ENCODE measurements at regions of chr19 and their contacts with region 1.

Region 1: DNA sequence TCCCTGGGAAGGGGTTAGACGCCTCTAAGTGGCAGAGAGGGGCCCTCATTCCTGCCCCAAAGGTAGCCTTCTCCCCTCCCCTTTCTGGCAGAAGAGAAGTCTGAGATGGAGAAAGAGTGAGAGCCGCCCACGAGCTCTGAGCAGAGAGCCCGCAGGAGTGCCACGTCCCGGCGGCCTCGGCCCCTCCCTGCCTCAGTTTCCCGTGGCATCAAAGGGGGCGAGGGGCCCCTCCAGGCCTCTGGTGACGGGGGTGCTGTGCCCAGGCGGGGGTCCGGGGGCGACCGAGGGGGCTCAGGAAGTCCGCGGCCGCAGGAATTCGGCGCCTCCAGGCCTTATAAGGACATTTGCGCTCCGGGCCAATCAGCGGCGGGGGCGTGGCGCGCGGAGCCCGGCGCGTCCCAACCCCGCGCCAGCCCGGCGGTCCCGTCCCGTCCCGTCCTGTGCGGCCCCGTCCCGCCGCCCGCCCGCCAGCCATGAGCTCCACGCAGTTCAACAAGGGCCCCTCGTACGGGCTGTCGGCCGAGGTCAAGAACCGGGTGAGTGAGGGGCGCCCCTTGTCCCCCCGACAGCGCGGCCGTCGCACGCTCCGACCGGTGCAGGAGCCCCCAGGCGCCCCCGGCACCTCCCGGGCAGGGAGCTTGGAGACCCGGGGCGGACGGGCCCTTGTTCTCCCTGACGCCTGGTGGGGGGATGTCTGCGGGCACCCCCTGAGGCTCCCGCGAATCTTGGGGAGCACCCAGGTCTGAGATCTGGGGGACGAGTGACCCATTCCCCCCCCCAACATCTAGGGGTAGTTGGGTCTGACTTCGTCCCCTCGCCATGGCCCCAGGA is at the start of gene CNN2:
- DNase-seq: peak; percentile 93
- H3K4me3 ChIP-seq: peak within 1 kb of the TSS; percentile 82 to 100 (median 90)
- H3K27ac ChIP-seq: peak within 1 kb of the TSS; percentile 95 to 100 (median 98)
- H3K4me1 ChIP-seq: peaks cover 0 to 61% (median 43%) of the 10 kb centered on the region in 4 donors
- H3K27me3 ChIP-seq: no peaks in the 10 kb centered on the region
- CTCF ChIP-seq: no peak
- EP300 ChIP-seq: peak in 1 of 4 donors; percentile 20
- POLR2A ChIP-seq: peak; percentile 77 to 95
- total RNA-seq, gene CNN2: 25.5 to 59.0 (median 36.3) TPM

Region 2: DNA sequence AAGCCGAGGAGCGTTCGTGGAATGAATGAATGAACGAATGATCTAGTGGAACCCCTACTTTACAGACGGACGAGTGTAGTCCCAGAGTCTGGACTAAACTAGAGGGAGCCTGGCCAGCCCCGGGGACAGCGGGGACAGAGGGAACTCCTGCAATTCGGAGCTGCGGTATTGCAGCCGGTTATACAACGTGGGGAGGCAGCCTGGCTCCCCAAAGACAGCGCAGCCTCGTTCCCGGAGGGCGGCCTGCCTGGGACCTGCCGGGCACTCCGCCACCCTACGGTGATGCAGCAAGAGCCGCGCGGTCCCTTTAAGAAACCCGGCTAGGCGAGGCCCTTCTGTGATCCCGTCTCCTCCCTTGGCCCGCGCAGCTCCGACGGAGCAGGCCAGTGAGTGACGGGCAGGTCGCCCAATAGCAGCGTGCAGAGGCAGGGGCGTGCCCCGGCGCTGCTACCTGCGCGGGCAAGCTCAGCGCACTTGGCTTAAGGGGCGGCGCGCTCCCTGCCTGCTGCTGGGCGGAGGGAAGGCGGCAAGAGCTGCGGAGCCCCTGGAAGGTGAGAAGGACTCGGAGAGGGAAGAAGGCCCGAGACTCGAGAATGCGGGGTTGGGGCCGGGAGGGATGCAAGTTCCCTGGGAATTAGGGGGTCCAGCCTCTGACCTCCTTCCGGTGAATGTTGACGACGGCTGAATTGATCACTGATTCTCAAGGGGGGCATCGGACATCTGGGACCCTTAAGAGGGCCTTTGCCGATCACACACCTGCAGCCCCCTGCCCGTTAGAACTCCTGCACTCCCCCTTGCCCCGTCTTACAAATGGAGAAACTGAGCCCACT is 13.5 kb after region 1 on chr19 and contains the start of gene ABCA7:
- intact Hi-C with region 1: no loop called
- DNase-seq: peak; percentile 99
- H3K4me3 ChIP-seq: peak within 1 kb of the TSS; percentile 19 to 57 (median 46)
- H3K27ac ChIP-seq: peak within 1 kb of the TSS; percentile 49 to 66 (median 64)
- H3K4me1 ChIP-seq: peaks cover 0 to 35% (median 31%) of the 10 kb centered on the region in 4 donors
- H3K27me3 ChIP-seq: peaks cover 0 to 20% (median 10%) of the 10 kb centered on the region in 3 donors
- CTCF ChIP-seq: no peak
- EP300 ChIP-seq: no peak
- POLR2A ChIP-seq: peak; percentile 7 to 60
- total RNA-seq, gene ABCA7: 3.8 to 20.5 (median 10.9) TPM

Region 3: DNA sequence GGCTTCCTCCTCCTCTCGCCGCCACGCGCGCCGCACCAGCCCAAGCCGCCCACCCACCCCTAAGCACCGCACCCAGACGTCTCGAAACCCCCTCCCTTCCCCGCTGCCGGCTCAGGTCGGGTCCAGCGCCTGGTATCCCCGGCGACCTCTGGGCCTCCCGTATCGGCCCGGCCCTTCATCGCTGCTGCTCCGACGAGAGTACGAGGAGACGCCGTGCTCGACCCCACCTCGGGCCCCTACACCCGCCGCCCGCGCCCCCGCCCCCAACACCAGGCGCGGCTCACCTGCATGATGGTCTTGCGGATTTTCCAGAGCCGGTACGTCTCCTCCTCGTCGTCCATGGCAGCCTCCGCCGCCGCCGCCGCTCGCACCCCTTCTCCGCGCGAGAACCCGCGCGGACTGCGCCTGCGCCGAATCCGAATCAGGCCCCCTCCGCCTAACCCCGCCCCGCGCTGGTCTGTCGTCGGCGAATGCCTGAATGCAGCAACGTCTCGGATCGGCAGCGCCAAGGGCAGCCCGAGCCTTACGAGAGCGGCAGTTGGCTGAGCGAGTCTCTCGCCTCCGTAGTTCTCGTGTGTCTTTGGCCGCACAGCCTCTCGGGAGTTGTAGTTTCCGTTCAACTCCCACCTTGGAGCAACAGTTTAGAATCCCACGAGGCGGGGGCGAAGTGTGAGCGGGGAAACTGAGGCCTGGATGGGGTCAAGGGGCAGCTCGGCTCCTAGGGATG is 68.7 kb after region 1 on chr19 and contains the start of gene POLR2E:
- intact Hi-C with region 1: loop called (anchors 5 kb)
- DNase-seq: peak; percentile 100
- H3K4me3 ChIP-seq: peak within 1 kb of the TSS; percentile 71 to 99 (median 97)
- H3K27ac ChIP-seq: peak within 1 kb of the TSS; percentile 77 to 87 (median 81)
- H3K4me1 ChIP-seq: peaks cover 0 to 37% (median 30%) of the 10 kb centered on the region in 4 donors
- H3K27me3 ChIP-seq: no peaks in the 10 kb centered on the region
- CTCF ChIP-seq: no peak
- EP300 ChIP-seq: peak in 1 of 4 donors; percentile 28
- POLR2A ChIP-seq: peak; percentile 77 to 80
- total RNA-seq, gene POLR2E: 82.0 to 203 (median 104) TPM

Measured in sigmoid colon (tissue), 7 donors.